ENCODE measurements at regions of chr2 and their contacts with region 1.

Region 1: DNA sequence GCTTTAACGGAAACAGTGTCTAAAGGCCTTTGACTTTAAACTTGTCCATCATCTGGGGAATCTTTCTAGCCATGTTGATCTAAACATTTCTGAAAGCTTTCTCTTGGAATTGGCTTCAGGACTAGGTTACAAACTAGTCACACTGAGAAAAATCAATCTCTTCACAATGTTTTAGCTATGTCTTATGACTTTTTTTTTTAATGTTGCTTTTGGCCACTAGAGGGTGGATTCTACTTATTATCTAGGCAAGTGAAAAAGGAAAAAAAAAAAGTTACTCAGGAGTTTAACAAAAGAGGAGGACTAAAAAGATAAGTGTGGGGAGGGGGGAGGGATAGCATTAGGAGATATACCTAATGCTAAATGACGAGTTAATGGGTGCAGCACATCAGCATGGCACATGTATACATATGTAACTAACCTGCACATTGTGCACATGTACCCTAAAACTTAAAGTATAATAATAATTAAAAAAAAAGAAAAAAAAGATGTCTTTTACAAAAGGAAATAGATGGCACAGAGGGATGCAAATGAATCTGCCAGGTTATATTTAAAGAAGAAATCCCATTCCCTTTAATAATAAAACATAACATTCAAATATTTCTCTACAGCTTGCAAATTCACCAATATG is 160.4 kb upstream of the PID1 start:
- DNase-seq: peak; percentile 54
- H3K4me3 ChIP-seq: no peak overlapping the region
- H3K27ac ChIP-seq: no peak overlapping the region
- H3K4me1 ChIP-seq: no peaks in the 10 kb centered on the region
- H3K27me3 ChIP-seq: no peaks in the 10 kb centered on the region
- CTCF ChIP-seq: peak; percentile 23 to 30
- POLR2A ChIP-seq: no peak

Region 2: DNA sequence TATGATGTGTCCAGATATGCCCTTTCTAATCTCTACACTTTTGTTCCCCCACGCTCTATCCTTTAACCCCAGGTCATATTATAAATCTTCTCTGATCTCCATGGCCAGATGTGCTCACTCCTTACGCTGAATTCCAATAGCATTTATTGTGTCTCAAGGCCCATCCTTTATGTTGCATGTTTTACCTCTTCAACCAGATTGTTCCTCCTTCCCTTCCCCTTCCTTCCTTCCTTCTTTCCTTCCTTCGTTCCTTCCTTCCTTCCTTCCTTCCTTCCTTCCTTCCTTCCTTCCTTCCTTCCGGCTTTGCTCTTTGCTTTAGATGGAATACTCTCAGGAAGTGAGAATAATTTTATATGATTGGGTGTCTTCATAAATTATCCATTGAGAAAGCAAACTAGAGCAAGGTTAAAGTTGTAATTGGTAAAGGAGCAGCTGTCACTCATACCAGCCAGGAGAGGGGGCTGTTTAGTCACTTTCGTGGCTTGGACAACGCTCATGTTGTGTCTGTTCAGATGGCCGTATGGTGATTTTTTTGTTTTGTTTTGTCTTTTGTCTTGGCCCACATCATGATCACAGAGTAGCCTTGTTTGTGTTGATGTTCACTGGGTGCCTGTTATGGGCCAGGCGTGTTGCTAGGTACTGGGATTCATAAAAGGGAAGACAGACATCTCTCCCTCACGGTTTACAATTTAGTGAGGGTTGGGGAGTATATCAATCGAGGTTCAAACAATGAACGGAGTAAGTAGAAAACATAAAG is 1492.0 kb before region 1 on chr2:
- CTCF ChIA-PET with region 1: no interaction called
- POLR2A ChIA-PET with region 1: no interaction called
- dilution Hi-C with region 1: no loop called
- intact Hi-C with region 1: loop called (anchors 10 kb)
- DNase-seq: peak; percentile 22
- H3K4me3 ChIP-seq: no peak overlapping the region
- H3K27ac ChIP-seq: no peak overlapping the region
- H3K4me1 ChIP-seq: no peaks in the 10 kb centered on the region
- H3K27me3 ChIP-seq: no peaks in the 10 kb centered on the region
- CTCF ChIP-seq: peak; percentile 32 to 40
- POLR2A ChIP-seq: no peak

Region 3: DNA sequence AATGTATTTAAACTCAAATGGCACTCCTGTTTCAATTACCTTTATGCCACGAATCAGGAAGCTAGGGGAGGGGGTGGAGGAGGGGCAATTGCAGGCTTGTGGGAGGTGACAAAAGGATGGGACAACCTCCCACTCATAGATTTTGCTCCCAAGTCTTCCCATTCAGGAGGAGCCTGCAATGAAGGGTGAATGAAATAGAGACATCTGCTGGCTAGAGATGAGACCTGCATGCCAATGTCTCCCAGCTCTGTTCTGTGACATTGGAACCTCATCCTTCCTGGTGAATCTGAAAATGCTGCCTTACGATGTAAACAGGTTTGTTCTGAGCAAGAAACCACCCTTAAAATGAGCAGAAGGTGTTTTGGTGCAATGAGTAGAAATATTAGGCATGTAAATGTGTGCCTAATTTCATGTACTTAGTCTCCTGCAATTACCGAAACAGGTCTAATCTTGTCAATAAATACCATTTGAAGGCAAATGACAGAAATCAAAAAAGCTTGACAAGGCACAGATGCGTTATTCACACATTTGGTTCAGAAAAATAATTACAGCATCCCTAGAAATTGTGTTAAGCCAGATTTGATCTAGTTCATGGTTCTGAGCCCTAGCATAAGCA is 157.6 kb before region 1 on chr2:
- CTCF ChIA-PET with region 1: no interaction called
- POLR2A ChIA-PET with region 1: no interaction called
- dilution Hi-C with region 1: no loop called
- intact Hi-C with region 1: no loop called
- DNase-seq: peak; percentile 21
- H3K4me3 ChIP-seq: no peak overlapping the region
- H3K27ac ChIP-seq: no peak overlapping the region
- H3K4me1 ChIP-seq: no peaks in the 10 kb centered on the region
- H3K27me3 ChIP-seq: no peaks in the 10 kb centered on the region
- CTCF ChIP-seq: peak; percentile 45 to 51
- POLR2A ChIP-seq: no peak

Region 4: DNA sequence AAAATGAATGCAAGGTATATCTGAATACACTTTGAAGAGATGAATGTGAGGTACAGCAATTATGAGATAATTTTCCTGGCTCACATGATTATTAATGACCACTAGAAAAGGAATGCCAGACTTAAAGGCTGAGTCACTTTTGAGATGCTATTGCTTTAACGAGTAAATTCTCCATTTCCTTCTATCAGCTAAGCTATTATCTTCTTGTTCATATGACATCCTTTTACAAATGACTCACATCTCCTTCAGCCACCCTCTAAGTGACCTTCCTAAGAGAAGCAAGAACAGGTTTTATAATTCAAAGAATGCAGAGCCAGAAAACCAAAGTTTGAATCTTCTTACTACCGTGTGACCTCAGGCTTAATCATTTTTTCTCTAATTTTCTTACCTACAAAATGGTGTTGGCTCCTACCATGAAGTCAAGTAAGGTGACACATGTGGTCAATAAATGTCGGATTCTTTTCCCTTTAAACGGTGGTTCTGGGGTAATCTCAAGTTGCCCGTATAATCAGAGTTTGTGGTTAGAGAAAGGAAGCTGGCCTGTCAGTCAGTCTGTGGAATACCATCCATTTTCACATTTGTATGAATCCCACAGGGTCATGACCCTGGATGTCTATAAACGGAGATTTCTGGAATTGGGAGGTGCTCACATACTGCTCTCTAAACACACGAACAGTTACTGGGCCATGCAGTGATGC is 23.6 kb after region 1 on chr2:
- CTCF ChIA-PET with region 1: interaction called, 13 read pairs
- POLR2A ChIA-PET with region 1: no interaction called
- dilution Hi-C with region 1: no loop called
- intact Hi-C with region 1: no loop called
- DNase-seq: peak; percentile 67
- H3K4me3 ChIP-seq: no peak overlapping the region
- H3K27ac ChIP-seq: peak overlapping the region; percentile 75
- H3K4me1 ChIP-seq: peaks cover 22% of the 10 kb centered on the region
- H3K27me3 ChIP-seq: no peaks in the 10 kb centered on the region
- CTCF ChIP-seq: no peak
- POLR2A ChIP-seq: no peak

Region 5: GRCh38 chr2:229470781-229471180 is 39.3 kb after region 1 on chr2:
- CTCF ChIA-PET with region 1: interaction called, 11 read pairs
- POLR2A ChIA-PET with region 1: no interaction called
- dilution Hi-C with region 1: no loop called
- intact Hi-C with region 1: no loop called
- DNase-seq: no peak
- H3K4me3 ChIP-seq: no peak overlapping the region
- H3K27ac ChIP-seq: no peak overlapping the region
- H3K4me1 ChIP-seq: no peaks in the 10 kb centered on the region
- H3K27me3 ChIP-seq: no peaks in the 10 kb centered on the region
- CTCF ChIP-seq: no peak
- POLR2A ChIP-seq: no peak

Region 6: GRCh38 chr2:229586746-229587705 is 155.6 kb after region 1 on chr2:
- CTCF ChIA-PET with region 1: interaction called, 403 read pairs
- POLR2A ChIA-PET with region 1: interaction called, 6 read pairs
- dilution Hi-C with region 1: no loop called
- intact Hi-C with region 1: loop called (anchors 1 kb)
- DNase-seq: peak; percentile 53
- H3K4me3 ChIP-seq: no peak overlapping the region
- H3K27ac ChIP-seq: no peak overlapping the region
- H3K4me1 ChIP-seq: no peaks in the 10 kb centered on the region
- H3K27me3 ChIP-seq: no peaks in the 10 kb centered on the region
- CTCF ChIP-seq: peak; percentile 70 to 93
- POLR2A ChIP-seq: no peak

Measured in endothelial cell of umbilical vein (primary cell).